ENCODE measurements at regions of chr6 and their contacts with region 1.

Region 1: GRCh38 chr6:69796642-69797390 is at the start of gene LMBRD1:
- DNase-seq: peak; percentile 97
- H3K4me3 Mint-ChIP-seq: peak within 1 kb of the TSS; percentile 93
- H3K27ac Mint-ChIP-seq: peak within 1 kb of the TSS; percentile 92
- H3K4me1 Mint-ChIP-seq: peaks cover 28% of the 10 kb centered on the region
- H3K27me3 Mint-ChIP-seq: peaks cover 3% of the 10 kb centered on the region
- total RNA-seq, gene LMBRD1: 16.6 TPM in 2 replicates

Region 2: GRCh38 chr6:69732640-69733039 is 64.2 kb before region 1 on chr6:
- intact Hi-C with region 1: loop called (anchors 2 kb)
- DNase-seq: no peak
- H3K4me3 Mint-ChIP-seq: no peak overlapping the region
- H3K27ac Mint-ChIP-seq: no peak overlapping the region
- H3K4me1 Mint-ChIP-seq: no peaks in the 10 kb centered on the region
- H3K27me3 Mint-ChIP-seq: no peaks in the 10 kb centered on the region

Region 3: GRCh38 chr6:69816026-69816425 is 19.2 kb after region 1 on chr6:
- intact Hi-C with region 1: loop called (anchors 1 kb)
- DNase-seq: no peak
- H3K4me3 Mint-ChIP-seq: peak overlapping the region; percentile 76
- H3K27ac Mint-ChIP-seq: peak overlapping the region; percentile 83
- H3K4me1 Mint-ChIP-seq: peaks cover 53% of the 10 kb centered on the region
- H3K27me3 Mint-ChIP-seq: no peaks in the 10 kb centered on the region

Region 4: DNA sequence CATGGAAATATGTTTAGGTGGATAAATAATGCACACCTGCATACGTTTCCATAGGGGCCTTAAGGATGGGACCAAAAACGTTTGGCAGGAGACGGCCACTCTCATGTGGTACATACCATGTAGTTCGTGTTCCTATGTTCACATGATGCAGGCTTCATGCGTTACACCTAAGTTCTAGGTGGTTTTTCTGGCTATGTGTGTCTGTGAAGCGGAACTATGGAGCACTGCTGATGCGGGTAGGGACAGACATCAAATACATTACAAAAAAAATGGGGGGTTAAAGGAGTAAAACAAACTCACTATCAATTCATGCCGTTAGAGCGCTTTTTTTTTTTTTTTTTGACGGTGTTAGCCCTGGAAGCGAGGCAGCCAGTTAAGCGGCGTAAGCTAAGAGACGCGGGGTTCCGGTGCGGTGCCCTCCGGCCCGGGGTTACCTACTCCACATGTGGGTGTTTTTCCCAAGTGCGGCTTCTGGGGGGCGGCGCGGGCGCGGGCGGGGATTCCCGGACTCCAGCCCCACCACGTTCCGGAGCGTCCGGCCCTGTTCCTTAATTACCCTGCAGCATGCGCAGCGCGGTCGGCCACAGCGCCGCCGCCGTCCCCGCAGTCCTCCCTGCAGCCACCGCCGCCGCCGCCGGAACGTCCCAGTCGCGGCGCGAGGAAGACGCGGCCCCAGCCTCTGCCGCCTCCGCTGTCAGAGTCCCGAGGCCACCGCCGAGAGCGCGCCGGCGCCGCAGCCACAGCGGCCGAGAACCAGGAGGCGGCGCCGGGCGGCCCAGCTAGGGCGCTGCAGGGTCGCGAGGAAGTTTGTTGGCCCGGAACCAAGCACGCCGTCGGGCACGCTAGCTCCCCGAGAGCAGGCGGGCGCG is 70.2 kb after region 1 on chr6:
- intact Hi-C with region 1: loop called (anchors 1 kb)
- DNase-seq: peak; percentile 37
- H3K4me3 Mint-ChIP-seq: peak overlapping the region; percentile 85
- H3K27ac Mint-ChIP-seq: peak overlapping the region; percentile 41
- H3K4me1 Mint-ChIP-seq: peaks cover 23% of the 10 kb centered on the region
- H3K27me3 Mint-ChIP-seq: peaks cover 60% of the 10 kb centered on the region